ENCODE measurements at regions of chr15 and their contacts with region 1.

Region 1: DNA sequence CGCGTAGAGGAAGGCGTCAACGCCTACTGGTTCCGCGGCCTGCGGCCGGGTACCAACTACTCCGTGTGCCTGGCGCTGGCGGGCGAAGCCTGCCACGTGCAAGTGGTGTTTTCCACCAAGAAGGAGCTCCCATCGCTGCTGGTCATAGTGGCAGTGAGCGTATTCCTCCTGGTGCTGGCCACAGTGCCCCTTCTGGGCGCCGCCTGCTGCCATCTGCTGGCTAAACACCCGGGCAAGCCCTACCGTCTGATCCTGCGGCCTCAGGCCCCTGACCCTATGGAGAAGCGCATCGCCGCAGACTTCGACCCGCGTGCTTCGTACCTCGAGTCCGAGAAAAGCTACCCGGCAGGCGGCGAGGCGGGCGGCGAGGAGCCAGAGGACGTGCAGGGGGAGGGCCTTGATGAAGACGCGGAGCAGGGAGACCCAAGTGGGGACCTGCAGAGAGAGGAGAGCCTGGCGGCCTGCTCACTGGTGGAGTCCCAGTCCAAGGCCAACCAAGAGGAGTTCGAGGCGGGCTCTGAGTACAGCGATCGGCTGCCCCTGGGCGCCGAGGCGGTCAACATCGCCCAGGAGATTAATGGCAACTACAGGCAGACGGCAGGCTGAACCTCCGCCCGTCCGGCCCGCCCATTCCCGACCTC is 4.1 kb downstream of the ISLR2 start:
- DNase-seq: peak; percentile 47
- H3K4me3 Mint-ChIP-seq: no peak overlapping the region
- H3K27ac Mint-ChIP-seq: no peak overlapping the region
- H3K4me1 Mint-ChIP-seq: peaks cover 35% of the 10 kb centered on the region
- H3K27me3 Mint-ChIP-seq: peaks cover 79% of the 10 kb centered on the region

Region 2: DNA sequence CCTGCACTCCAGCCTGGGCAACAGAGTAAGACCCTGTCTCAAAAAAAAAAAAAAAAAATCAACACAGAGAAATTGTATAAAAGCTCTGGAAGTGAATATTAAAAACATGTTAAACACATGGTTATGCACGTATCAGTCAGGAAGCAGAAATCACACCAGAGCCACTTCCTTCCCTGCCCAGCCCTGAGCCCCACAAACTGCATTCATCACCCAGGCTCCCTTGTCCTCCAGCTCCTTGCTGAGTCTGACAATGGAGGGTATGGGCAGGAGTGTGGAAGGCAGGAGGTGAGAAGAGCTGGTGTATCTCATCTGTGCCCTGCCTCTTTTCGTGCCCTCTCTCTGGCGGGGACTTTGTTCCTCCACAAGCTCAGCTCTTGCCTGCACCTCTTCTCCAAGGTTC is 220.4 kb before region 1 on chr15:
- CTCF ChIA-PET with region 1: no interaction called
- intact Hi-C with region 1: no loop called
- DNase-seq: no peak
- H3K4me3 Mint-ChIP-seq: no peak overlapping the region
- H3K27ac Mint-ChIP-seq: no peak overlapping the region
- H3K4me1 Mint-ChIP-seq: no peaks in the 10 kb centered on the region
- H3K27me3 Mint-ChIP-seq: no peaks in the 10 kb centered on the region

Region 3: GRCh38 chr15:73950831-73951561 is 183.5 kb before region 1 on chr15:
- CTCF ChIA-PET with region 1: no interaction called
- intact Hi-C with region 1: loop called (anchors 5 kb)
- DNase-seq: peak; percentile 83
- H3K4me3 Mint-ChIP-seq: no peak overlapping the region
- H3K27ac Mint-ChIP-seq: no peak overlapping the region
- H3K4me1 Mint-ChIP-seq: peaks cover 3% of the 10 kb centered on the region
- H3K27me3 Mint-ChIP-seq: no peaks in the 10 kb centered on the region

Measured in activated naive CD4-positive, alpha-beta T cell treated with anti-CD3 and anti-CD28 coated beads for 36 hours (primary cell).